AG04450 (cell line): ENCODE measurements at regions of chr1 and their contacts with region 1.

Region 1: GRCh38 chr1:157992031-157992832 is 1.2 kb upstream of the KIRREL1 start:
- DNase-seq: no peak
- H3K4me3 ChIP-seq: no peak overlapping the region
- H3K27ac ChIP-seq: no peak overlapping the region
- H3K27me3 ChIP-seq: peaks cover 4% of the 10 kb centered on the region
- CTCF ChIP-seq: peak; percentile 100

Region 2: GRCh38 chr1:157978586-157979403 is 13.4 kb before region 1 on chr1:
- CTCF ChIA-PET with region 1: interaction called, 99 read pairs
- POLR2A ChIA-PET with region 1: no interaction called
- DNase-seq: no peak
- H3K4me3 ChIP-seq: no peak overlapping the region
- H3K27ac ChIP-seq: no peak overlapping the region
- H3K27me3 ChIP-seq: peaks cover 27% of the 10 kb centered on the region
- CTCF ChIP-seq: no peak

Region 3: GRCh38 chr1:158019171-158019868 is 27.1 kb after region 1 on chr1:
- CTCF ChIA-PET with region 1: interaction called, 26 read pairs
- POLR2A ChIA-PET with region 1: interaction called, 3 read pairs
- DNase-seq: peak; percentile 87
- H3K4me3 ChIP-seq: peak overlapping the region; percentile 32
- H3K27ac ChIP-seq: peak overlapping the region; percentile 97
- H3K27me3 ChIP-seq: no peaks in the 10 kb centered on the region
- CTCF ChIP-seq: no peak

Region 4: GRCh38 chr1:158059984-158060383 is 67.8 kb after region 1 on chr1:
- CTCF ChIA-PET with region 1: interaction called, 34 read pairs
- POLR2A ChIA-PET with region 1: no interaction called
- DNase-seq: no peak
- H3K4me3 ChIP-seq: no peak overlapping the region
- H3K27ac ChIP-seq: peak overlapping the region; percentile 21
- H3K27me3 ChIP-seq: no peaks in the 10 kb centered on the region
- CTCF ChIP-seq: no peak

Region 5: DNA sequence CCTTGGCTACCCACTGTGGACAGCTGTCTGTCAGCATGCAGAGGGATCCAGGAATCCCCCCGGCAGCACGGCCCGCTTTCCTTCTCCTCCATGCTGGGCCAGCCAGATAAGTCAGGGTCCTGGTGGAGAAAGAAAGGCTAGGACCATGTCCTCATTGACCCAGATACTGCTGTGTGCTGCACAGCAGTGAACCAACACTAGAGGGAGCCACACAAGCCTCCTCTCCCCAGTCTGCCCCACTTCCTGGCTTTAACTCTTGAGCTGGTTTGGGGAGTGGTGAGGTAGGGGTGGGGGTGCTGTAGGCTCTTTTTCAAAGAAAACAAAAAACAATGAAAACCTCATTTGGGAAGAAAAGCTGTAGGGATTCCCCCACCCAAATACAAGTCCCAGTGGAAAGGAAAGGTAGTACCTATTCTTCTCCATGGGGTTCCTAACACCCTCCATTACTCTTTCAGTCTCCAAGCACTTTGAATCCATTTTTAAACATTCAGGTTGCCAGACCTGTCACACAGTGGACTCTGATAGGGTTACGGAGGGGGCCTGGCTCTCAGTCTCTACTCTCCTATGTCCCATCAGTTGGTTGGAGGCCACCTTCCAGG is 103.6 kb after region 1 on chr1:
- CTCF ChIA-PET with region 1: interaction called, 105 read pairs
- POLR2A ChIA-PET with region 1: no interaction called
- DNase-seq: no peak
- H3K4me3 ChIP-seq: no peak overlapping the region
- H3K27ac ChIP-seq: no peak overlapping the region
- H3K27me3 ChIP-seq: no peaks in the 10 kb centered on the region
- CTCF ChIP-seq: peak; percentile 75

Region 6: GRCh38 chr1:158117854-158118704 is 125.8 kb after region 1 on chr1:
- CTCF ChIA-PET with region 1: interaction called, 590 read pairs
- POLR2A ChIA-PET with region 1: interaction called, 3 read pairs
- DNase-seq: no peak
- H3K4me3 ChIP-seq: peak overlapping the region; percentile 36
- H3K27ac ChIP-seq: no peak overlapping the region
- H3K27me3 ChIP-seq: peaks cover 20% of the 10 kb centered on the region
- CTCF ChIP-seq: peak; percentile 80